ENCODE measurements at regions of chr20 and their contacts with region 1.

Region 1: DNA sequence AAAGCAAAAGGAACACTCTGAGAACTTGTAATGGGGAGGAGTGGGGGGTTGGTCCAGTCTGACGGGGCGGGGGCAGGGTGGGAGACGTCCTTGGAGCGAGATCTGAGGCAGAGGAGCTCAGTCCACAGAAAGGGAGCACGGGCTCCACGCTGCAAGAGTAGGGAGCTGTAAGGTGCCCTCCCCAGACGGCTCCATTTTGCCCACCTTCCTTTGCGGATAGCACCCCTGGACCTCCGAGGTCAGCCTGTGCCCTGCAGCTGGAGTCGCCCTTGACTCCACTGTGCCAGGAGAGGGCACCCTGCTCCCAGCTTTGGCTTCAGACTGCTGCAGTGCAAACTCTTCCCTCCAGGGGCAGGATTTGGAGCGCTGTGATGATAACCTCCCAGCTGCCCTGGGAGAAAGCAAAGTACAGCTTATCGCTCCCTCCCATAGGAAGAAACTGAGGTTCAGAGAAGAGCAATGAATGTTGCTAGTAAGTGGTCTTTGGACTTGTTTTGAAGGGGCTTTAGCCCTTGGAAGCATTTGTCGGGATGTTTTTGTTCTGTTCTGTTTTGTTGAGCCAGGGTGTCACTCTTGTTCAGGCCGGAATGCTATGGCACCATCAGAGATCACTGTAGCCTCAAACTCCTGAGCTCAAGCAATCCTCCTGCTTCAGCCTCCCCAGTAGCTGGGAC is 9.5 kb upstream of the AHCY start:
- DNase-seq: peak; percentile 93
- H3K27ac ChIP-seq: peak overlapping the region; percentile 0; the same call in 1 of the 2 replicates
- CTCF ChIP-seq: peak; percentile 100

Region 2: GRCh38 chr20:34232494-34233087 is 80.1 kb before region 1 on chr20:
- CTCF ChIA-PET with region 1: no interaction called
- POLR2A ChIA-PET with region 1: no interaction called
- DNase-seq: no peak
- H3K27ac ChIP-seq: no peak overlapping the region
- CTCF ChIP-seq: no peak

Region 3: DNA sequence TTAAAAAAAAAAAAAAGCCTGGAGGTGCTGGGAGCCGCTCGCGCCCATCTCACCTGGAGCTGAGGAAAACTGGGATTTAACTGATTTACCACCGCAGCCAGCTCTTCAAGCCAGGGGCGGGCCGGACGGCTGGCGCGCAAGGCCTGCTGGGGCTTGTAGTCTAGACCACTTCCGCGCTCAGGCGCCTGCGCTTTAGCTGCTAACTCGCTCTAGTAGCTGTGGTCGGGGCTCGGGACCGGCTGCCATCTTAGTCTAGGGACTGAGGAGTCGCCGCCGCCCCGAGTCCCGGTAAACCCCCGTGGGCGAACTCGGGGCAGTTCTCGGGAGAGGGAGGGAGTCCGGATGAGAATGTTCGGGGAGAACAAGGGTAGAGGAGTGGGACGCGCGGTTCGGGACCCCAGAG is 50.4 kb after region 1 on chr20 and contains the start of gene ITCH:
- CTCF ChIA-PET with region 1: interaction called, 44 read pairs
- POLR2A ChIA-PET with region 1: interaction called, 4 read pairs
- DNase-seq: peak; percentile 99
- H3K27ac ChIP-seq: peak within 1 kb of the TSS; percentile 86
- CTCF ChIP-seq: no peak

Region 4: GRCh38 chr20:34397096-34397495 is 84.4 kb after region 1 on chr20:
- CTCF ChIA-PET with region 1: interaction called, 33 read pairs
- POLR2A ChIA-PET with region 1: no interaction called
- DNase-seq: no peak
- H3K27ac ChIP-seq: 0 out of 2 replicates have a peak overlapping the region, but pooled peaks have one; percentile 16
- CTCF ChIP-seq: no peak

Region 5: DNA sequence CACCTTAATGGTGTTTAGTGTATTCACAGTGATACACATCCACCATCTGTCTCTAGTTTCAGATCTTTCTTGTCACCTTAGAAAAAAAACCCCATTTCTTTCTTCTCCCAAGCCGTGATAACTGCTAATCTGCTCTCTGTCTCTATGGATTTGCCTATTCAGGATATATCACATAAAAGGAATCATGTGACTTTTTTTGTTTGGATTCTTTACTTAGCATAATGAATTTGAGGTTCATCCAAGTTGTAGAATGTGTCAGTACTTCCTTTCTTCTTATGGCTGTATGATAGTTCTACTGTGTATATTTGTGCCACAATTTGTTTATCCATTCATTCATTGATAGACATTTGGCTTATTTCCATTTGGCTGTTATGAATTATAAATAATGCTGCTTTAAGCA is 107.5 kb after region 1 on chr20:
- CTCF ChIA-PET with region 1: interaction called, 31 read pairs
- POLR2A ChIA-PET with region 1: interaction called, 3 read pairs
- DNase-seq: no peak
- H3K27ac ChIP-seq: no peak overlapping the region
- CTCF ChIP-seq: no peak

Region 6: GRCh38 chr20:34445177-34446065 is 132.7 kb after region 1 on chr20:
- CTCF ChIA-PET with region 1: interaction called, 27 read pairs
- POLR2A ChIA-PET with region 1: no interaction called
- DNase-seq: no peak
- H3K27ac ChIP-seq: no peak overlapping the region
- CTCF ChIP-seq: no peak

Region 7: DNA sequence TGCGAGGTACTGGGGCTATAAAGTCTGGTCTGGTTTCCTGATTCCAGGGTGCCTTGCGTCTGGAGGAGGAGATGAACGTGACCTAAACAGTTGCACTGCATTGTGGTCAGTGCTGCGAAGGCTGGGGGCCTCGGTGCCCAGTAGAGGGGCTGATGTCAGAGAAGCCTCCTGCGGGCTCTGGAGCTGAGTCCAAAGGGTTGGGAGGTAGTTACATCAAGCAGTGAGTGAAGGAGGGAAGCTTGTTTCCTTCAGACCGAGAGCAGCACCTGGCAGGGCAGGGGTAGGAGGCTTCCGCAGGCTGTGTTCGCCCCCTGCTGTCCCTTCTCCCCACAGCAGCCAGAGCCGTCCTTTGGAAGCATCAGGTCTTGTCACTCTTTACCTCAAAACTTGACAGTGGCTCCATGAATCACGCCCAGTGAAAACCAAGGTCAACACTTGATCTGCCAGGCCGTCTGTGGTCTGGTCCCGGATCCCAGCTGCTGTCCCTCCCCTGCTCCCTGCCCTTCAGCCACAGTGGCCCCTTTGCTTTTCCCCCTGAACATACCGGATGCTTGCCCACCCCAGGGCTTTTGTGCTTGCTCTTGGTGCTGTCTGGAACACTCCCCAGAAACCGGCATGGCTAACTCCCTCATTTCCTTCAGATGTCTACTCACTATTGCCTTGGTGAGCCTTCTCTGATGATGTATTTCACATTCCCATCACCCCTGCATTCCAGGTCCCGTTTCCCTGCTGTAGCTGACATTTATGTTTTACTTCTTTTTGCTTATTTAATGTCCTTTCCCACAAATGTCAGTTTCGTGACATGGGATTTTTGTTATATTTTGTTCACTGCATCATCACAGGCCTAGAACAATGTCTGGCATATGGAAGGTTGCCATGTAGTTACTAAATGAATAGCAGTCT is 210.5 kb after region 1 on chr20:
- CTCF ChIA-PET with region 1: interaction called, 21 read pairs
- POLR2A ChIA-PET with region 1: no interaction called
- DNase-seq: peak; percentile 48
- H3K27ac ChIP-seq: peak overlapping the region; percentile 66
- CTCF ChIP-seq: no peak; the same call in 1 of the 2 replicates